ENCODE measurements at regions of chr7 and their contacts with region 1.

Region 1: DNA sequence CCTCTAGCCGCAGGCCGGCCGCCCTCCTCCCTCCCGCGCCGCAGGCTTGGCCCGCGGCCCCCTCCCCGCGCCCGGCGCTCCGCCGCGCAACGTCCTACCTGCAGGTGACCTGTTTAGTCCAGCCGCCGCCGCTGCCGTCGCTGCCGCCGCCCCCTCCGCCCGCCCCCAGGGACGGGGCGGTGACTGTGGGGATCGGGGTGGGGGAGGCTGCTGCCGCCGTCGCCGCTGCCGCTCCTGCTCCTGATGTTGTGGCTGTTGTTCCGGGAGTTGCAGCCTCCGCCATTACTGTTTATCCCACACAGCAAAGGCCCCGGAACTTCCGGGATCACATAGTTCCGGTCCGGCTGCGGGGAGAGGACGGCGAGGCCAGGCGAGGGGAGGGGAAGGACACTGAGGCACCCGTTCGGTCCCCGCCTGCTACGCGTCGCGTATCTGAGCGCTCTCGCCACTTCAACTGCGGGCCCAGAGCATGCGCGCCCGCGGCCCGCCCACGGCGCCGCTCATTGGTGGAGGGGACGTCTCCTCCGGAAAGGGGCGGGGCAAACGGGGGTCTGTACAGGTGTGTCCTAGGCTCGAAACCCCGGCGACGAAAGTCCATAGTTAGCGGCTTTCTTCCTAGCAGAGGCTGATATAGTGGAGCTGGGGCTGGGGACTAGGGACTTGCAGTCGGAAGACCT is at the start of gene MKRN1:
- DNase-seq: peak; percentile 89
- H3K4me3 Mint-ChIP-seq: peak within 1 kb of the TSS; percentile 97
- H3K27ac Mint-ChIP-seq: peak within 1 kb of the TSS; percentile 96
- H3K4me1 Mint-ChIP-seq: peaks cover 25% of the 10 kb centered on the region
- H3K27me3 Mint-ChIP-seq: no peaks in the 10 kb centered on the region
- total RNA-seq, gene MKRN1: 72.9 and 73.6 TPM in 2 replicates

Region 2: GRCh38 chr7:140230861-140231770 is 248.1 kb before region 1 on chr7:
- intact Hi-C with region 1: loop called (anchors 2 kb)
- DNase-seq: peak; percentile 45
- H3K4me3 Mint-ChIP-seq: peak overlapping the region; percentile 86
- H3K27ac Mint-ChIP-seq: peak overlapping the region; percentile 92
- H3K4me1 Mint-ChIP-seq: peaks cover 27% of the 10 kb centered on the region
- H3K27me3 Mint-ChIP-seq: no peaks in the 10 kb centered on the region

Region 3: DNA sequence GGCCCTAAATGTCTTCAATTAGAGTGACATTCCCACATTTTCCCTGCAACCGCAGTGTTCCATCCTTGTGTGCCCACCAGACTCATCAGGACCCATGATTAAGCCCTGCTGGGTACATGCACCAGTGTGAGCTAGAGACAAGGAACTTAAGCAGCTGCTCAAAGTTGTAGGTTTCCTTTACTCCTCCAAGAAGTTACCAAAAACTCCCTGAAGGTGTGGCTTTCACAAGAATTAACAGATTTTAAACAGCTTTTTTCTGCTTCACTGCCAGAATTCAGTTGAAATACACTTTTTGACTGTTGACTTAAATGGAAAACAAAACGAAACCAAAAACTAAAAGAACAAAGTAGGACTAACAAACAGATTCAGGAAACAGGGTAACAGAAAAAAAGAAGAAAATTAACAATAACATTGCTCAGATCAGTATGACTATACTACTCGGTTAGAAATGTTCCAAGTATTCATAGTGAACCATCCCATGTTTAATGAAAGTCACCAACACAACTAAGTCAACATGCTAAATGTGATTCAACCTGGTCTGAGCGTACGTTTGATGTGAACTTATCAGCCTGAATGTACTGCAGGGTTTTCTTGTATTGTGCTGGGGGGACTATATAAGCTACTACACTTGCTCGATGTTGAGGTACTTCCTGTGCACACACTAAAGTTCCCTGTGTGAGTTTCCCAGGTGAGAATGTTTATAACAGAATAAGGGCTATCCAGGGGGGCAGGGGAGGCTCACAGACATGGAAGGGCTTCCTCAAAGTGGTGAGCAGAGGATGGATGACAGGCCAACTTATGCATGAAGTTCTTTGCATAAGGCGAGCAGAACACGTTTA is 103.1 kb before region 1 on chr7:
- intact Hi-C with region 1: loop called (anchors 1 kb)
- DNase-seq: peak; percentile 26
- H3K4me3 Mint-ChIP-seq: peak overlapping the region; percentile 65
- H3K27ac Mint-ChIP-seq: peak overlapping the region; percentile 97
- H3K4me1 Mint-ChIP-seq: peaks cover 51% of the 10 kb centered on the region
- H3K27me3 Mint-ChIP-seq: no peaks in the 10 kb centered on the region

Region 4: GRCh38 chr7:140494867-140495266 is 15.7 kb after region 1 on chr7:
- intact Hi-C with region 1: loop called (anchors 1 kb)
- DNase-seq: no peak
- H3K4me3 Mint-ChIP-seq: no peak overlapping the region
- H3K27ac Mint-ChIP-seq: no peak overlapping the region
- H3K4me1 Mint-ChIP-seq: no peaks in the 10 kb centered on the region
- H3K27me3 Mint-ChIP-seq: no peaks in the 10 kb centered on the region

Measured in activated T-helper 2 cell treated with anti-CD3 and anti-CD28 coated beads, Interferon-gamma antibody, Interleukin-2, Interleukin-4, amounts not matched to agents 10 μg/mL and 5 μg/mL and 100 μg/mL, durations not matched to agents 14 hours and 24 hours and 36 hours (primary cell).